H1 (cell line): ENCODE measurements at regions of chr16 and their contacts with region 1.

Region 1: DNA sequence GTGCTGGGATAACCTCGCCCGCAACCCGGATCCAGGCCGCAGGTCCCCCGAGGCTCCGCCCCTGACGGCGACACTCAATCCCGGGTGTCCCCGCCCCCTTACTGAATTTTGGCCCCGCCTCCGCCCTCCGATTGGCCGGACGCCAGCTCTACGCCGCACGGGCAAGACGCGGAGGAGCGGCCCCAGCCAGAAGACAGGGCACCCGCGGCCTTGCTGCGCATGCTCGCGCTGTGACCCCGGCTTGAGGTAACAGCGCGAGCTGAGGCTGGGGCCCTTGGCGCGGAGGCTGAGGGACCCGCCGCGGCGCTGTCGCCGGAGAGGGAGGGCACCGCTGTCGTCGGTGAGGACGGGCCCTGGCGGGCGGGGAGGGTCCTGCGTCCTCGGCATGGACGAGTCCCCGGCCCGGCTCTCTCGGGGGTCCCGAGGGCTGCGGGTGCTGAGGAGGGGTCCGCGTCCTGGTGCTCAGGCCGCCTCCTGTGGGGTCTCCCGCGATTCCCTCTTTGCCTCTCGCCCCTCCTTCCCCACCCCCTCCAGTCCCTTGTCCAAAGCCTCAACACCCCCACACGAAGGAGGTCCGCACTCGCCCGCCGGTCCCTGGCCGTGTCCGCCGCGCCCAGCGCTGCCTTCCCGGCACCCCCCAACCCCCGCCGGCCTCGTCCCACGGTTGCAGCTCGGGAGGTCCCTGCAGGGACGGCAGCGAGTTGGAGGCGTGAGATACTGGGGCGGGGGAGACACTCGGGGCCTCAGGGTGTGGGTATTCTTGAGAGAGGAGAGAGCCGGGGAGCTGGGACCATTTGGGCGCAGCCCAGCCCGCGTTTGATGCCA is at the start of gene FLYWCH2:
- DNase-seq: peak; percentile 92 to 100
- H3K4me3 ChIP-seq: peak within 1 kb of the TSS; percentile 81 to 89 (median 84)
- H3K27ac ChIP-seq: peak within 1 kb of the TSS; percentile 72; the same call in 1 of the 2 replicates
- H3K4me1 ChIP-seq: peaks cover 0 to 1% (median 0%) of the 10 kb centered on the region in 4 experiments; a peak in 3 of 7 replicates
- H3K27me3 ChIP-seq: no peaks in the 10 kb centered on the region; a peak in 1 of 7 replicates
- CTCF ChIP-seq: no peak
- EP300 ChIP-seq: no peak
- POLR2A ChIP-seq: 0 out of 3 replicates have a peak, but pooled peaks of 1 of the 2 experiments have one; percentile 39
- RAD21 ChIP-seq: no peak
- total RNA-seq, gene FLYWCH2: 16.4 and 20.2 TPM in 2 replicates

Region 2: GRCh38 chr16:2911580-2912329 is 28.5 kb after region 1 on chr16 and contains the start of gene FLYWCH1:
- CTCF ChIA-PET with region 1: interaction called, 10 read pairs
- POLR2A ChIA-PET with region 1: interaction called, 11 read pairs
- DNase-seq: peak; percentile 96 to 99
- H3K4me3 ChIP-seq: peak within 1 kb of the TSS; percentile 61 to 87 (median 73)
- H3K27ac ChIP-seq: no peak within 1 kb of the TSS
- H3K4me1 ChIP-seq: peaks cover 0 to 6% (median 2%) of the 10 kb centered on the region in 4 experiments; a peak in 3 of 7 replicates
- H3K27me3 ChIP-seq: peaks cover 0 to 9% (median 8%) of the 10 kb centered on the region in 4 experiments; a peak in 5 of 7 replicates
- CTCF ChIP-seq: no peak
- EP300 ChIP-seq: 0 out of 3 replicates have a peak, but pooled peaks of 1 of the 2 experiments have one; percentile 15
- POLR2A ChIP-seq: 0 out of 3 replicates have a peak, but pooled peaks of 1 of the 2 experiments have one; percentile 28
- RAD21 ChIP-seq: no peak
- total RNA-seq, gene FLYWCH1: 23.1 and 23.5 TPM in 2 replicates